ENCODE measurements at regions of chr1 and their contacts with region 1.

Region 1: GRCh38 chr1:230073371-230074035 is 6.5 kb downstream of the GALNT2 start:
- DNase-seq: no peak
- H3K4me3 Mint-ChIP-seq: no peak overlapping the region
- H3K27ac Mint-ChIP-seq: no peak overlapping the region
- H3K4me1 Mint-ChIP-seq: peaks cover 66% of the 10 kb centered on the region
- H3K27me3 Mint-ChIP-seq: no peaks in the 10 kb centered on the region

Region 2: GRCh38 chr1:230047114-230047865 is 26.2 kb before region 1 on chr1:
- CTCF ChIA-PET with region 1: no interaction called
- POLR2A ChIA-PET with region 1: no interaction called
- intact Hi-C with region 1: no loop called
- DNase-seq: no peak
- H3K4me3 Mint-ChIP-seq: no peak overlapping the region
- H3K27ac Mint-ChIP-seq: no peak overlapping the region
- H3K4me1 Mint-ChIP-seq: peaks cover 4% of the 10 kb centered on the region
- H3K27me3 Mint-ChIP-seq: peaks cover 18% of the 10 kb centered on the region

Region 3: GRCh38 chr1:230084138-230084880 is 10.8 kb after region 1 on chr1:
- CTCF ChIA-PET with region 1: interaction called, 5 read pairs
- POLR2A ChIA-PET with region 1: interaction called, 4 read pairs
- intact Hi-C with region 1: loop called (anchors 1 kb)
- DNase-seq: peak; percentile 90
- H3K4me3 Mint-ChIP-seq: peak overlapping the region; percentile 33
- H3K27ac Mint-ChIP-seq: peak overlapping the region; percentile 78
- H3K4me1 Mint-ChIP-seq: peaks cover 58% of the 10 kb centered on the region
- H3K27me3 Mint-ChIP-seq: peaks cover 1% of the 10 kb centered on the region